WTC11 (cell line): ENCODE measurements at regions of chr11 and their contacts with region 1.

Region 1: GRCh38 chr11:17098038-17098437 is 20.6 kb upstream of the RPS13 start:
- DNase-seq: no peak
- ATAC-seq: no peak
- H3K4me3 Mint-ChIP-seq: no peak overlapping the region
- H3K27ac Mint-ChIP-seq: no peak overlapping the region
- H3K4me1 Mint-ChIP-seq: no peaks in the 10 kb centered on the region
- H3K27me3 Mint-ChIP-seq: no peaks in the 10 kb centered on the region
- CTCF ChIP-seq: no peak

Region 2: DNA sequence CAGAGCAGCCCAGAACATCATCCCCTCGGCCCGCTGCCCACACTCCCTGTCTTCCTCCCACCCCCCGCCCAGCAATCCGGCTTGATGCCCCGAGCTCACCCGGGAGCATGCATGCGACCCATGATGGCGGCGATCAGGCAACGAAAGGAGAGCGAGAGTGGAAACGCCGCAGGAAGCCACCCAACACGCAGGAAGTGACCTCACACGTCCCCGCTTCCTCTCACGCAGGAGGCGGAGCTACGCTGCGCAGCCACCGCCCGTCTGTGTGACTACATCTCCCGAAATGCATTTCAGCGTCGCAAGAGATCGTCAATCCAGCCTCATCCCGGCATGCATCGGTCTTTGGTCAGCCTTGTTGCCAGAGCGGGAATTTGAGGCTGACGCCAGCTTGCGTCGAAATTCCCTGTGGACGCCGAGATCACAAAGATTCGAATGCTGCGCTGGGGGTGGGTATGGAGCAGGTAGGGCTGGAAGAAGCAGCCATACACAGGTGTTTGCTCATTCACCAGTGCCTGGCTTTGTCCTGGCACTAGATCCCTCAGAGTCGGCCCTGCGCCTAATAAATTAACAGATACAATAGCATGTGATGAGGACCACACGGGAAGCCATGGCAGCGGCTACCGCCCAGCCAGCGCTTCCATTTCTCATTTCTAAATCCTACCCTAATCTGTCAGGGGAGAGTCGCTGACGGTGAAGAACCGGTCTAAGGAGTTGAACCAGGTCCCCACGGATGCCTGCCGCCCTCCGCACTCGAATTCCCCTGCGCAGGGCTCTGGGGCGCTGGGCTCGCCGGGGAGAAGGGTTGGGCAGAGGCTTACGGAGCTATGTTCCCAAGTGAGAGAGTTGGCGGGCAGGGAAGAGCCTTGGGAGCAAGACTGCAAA is 20.3 kb before region 1 on chr11 and contains the start of gene RPS13:
- CTCF ChIA-PET with region 1: no interaction called
- POLR2A ChIA-PET with region 1: interaction called, 10 read pairs
- DNase-seq: peak; percentile 96
- ATAC-seq: peak; percentile 95
- H3K4me3 Mint-ChIP-seq: peak within 1 kb of the TSS; percentile 99
- H3K27ac Mint-ChIP-seq: peak within 1 kb of the TSS; percentile 96
- H3K4me1 Mint-ChIP-seq: peaks cover 24% of the 10 kb centered on the region
- H3K27me3 Mint-ChIP-seq: no peaks in the 10 kb centered on the region
- CTCF ChIP-seq: no peak
- total RNA-seq, gene RPS13: 1,191 to 1,268 TPM (median 1,200 TPM) in 3 replicates

Region 3: GRCh38 chr11:17154409-17155159 is 56.5 kb after region 1 on chr11:
- CTCF ChIA-PET with region 1: no interaction called
- POLR2A ChIA-PET with region 1: no interaction called
- DNase-seq: no peak
- ATAC-seq: no peak
- H3K4me3 Mint-ChIP-seq: no peak overlapping the region
- H3K27ac Mint-ChIP-seq: peak overlapping the region; percentile 46
- H3K4me1 Mint-ChIP-seq: peaks cover 17% of the 10 kb centered on the region
- H3K27me3 Mint-ChIP-seq: no peaks in the 10 kb centered on the region
- CTCF ChIP-seq: no peak